Naive thymus-derived CD4-positive, alpha-beta T cell (primary cell): ENCODE measurements at regions of chr16 and their contacts with region 1.

Region 1: GRCh38 chr16:3282730-3283524 is at the start of gene ZNF263:
- DNase-seq: peak; percentile 91 to 97 (median 95)
- ATAC-seq: peak; percentile 94
- H3K4me3 ChIP-seq: peak within 1 kb of the TSS; percentile 83
- H3K4me3 Mint-ChIP-seq: peak within 1 kb of the TSS; percentile 93 to 98 (median 96)
- H3K27ac ChIP-seq: peak within 1 kb of the TSS; percentile 92
- H3K27ac Mint-ChIP-seq: peak within 1 kb of the TSS; percentile 96 to 99 (median 98)
- H3K4me1 ChIP-seq: peaks cover 18 to 26% of the 10 kb centered on the region in 2 donors
- H3K4me1 Mint-ChIP-seq: peaks cover 21 to 48% (median 40%) of the 10 kb centered on the region in 7 donors
- H3K27me3 ChIP-seq: no peaks in the 10 kb centered on the region
- H3K27me3 Mint-ChIP-seq: peaks cover 0 to 3% (median 0%) of the 10 kb centered on the region in 5 donors
- total RNA-seq, gene ZNF263: 26.1 to 51.6 (median 36.9) TPM

Region 2: DNA sequence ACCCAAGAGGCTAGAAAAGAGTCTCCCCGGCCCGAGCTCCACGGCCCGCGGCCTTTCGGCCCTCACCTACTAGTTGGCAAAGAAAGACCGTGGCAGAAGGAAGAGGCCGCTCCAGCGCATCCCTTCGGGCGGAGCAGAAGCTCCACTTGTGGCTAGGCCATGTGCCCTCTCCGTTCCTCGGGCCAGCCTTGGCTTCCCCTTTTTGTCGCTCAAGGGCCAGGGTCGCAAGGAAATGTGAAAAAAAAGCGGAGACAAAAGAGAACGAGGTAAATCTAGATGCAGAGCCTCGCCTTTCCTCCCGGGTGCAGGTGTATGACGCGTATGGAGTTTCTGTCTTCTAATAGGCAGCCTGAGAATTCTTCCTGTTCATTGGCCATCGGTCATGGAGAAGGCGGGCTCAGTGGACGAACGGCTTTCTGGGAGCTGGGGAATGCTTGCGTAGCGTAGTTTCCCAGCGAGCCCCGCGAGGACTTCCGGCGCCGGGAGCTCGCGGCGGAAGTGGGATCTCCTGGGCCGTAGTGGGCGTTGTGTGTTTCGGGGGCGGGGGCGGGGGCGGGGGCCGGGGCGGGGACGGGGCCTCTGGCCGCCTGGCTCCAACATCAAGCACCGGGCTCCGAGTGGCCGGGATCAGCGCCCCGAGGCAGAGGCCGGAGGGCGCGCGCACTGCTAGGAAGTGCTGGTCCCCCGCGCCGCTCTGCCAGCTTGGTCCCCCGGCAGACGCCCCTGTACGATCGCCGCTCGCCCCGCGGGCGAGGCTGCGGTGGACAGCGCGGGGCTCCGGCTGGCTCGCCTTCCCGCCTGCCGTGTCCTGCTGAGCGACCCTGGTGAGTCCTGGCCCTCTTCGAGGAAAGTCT is 148.1 kb before region 1 on chr16 and contains the start of gene ZNF213:
- CTCF ChIA-PET with region 1: no interaction called
- POLR2A ChIA-PET with region 1: interaction called, 6 read pairs
- intact Hi-C with region 1: loop called in 1 of 2 experiments (anchors 1 kb)
- DNase-seq: peak; percentile 70 to 97 (median 95)
- ATAC-seq: peak; percentile 98
- H3K4me3 ChIP-seq: peak within 1 kb of the TSS; percentile 94
- H3K4me3 Mint-ChIP-seq: peak within 1 kb of the TSS; percentile 93 to 99 (median 96)
- H3K27ac ChIP-seq: peak within 1 kb of the TSS; percentile 93
- H3K27ac Mint-ChIP-seq: peak within 1 kb of the TSS; percentile 94 to 98 (median 97)
- H3K4me1 ChIP-seq: peaks cover 10 to 11% of the 10 kb centered on the region in 2 donors
- H3K4me1 Mint-ChIP-seq: peaks cover 12 to 45% (median 34%) of the 10 kb centered on the region in 7 donors
- H3K27me3 ChIP-seq: no peaks in the 10 kb centered on the region
- H3K27me3 Mint-ChIP-seq: no peaks in the 10 kb centered on the region
- total RNA-seq, gene ZNF213: 3.8 to 14.0 (median 11.8) TPM

Region 3: DNA sequence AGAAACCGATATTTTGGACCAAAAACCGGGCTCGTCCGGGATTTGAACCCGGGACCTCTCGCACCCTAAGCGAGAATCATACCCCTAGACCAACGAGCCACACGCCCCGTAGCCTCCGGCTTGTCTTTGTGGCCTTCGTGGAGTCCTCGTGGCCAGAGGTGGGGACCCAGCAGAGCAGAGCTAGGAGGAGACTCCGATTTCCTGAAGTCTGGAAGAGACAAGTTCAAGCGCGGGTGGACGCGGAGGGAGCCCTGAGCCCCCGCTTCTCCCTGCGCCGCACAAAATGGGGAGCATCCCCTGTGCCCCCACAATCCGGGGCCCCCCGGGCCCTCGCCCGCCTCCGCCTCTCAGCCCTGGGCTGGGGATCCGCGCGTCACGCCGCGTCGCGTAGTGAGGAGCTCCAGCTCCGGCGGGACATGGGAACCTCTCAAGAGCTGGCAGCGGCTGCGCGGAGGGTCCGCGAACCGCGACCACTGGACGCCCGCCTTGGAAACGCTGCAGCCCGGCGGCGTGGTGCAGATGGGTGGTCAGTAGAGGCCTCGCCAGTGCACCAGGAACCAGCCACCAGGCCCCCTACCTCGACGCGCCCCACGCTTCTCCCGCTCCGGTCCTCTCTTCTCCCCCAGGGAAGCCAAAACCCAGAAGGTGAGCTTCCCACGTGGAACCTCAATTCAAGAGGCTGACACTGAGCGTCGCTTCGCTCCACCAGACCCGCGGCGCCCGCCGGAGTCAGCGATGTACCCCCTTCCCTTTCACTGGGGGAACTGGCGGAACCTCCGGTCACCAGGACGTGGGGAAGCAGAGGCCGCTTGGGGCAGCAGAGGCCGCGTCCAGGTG is 100.1 kb before region 1 on chr16:
- CTCF ChIA-PET with region 1: interaction called, 3 read pairs
- POLR2A ChIA-PET with region 1: interaction called, 10 read pairs
- intact Hi-C with region 1: loop called in 1 of 2 experiments (anchors 1 kb)
- DNase-seq: peak in 5 of 9 donors; percentile 32 to 71 (median 43)
- ATAC-seq: peak; percentile 41
- H3K4me3 ChIP-seq: peak overlapping the region; percentile 58
- H3K4me3 Mint-ChIP-seq: peak overlapping the region; percentile 72 to 86 (median 79)
- H3K27ac ChIP-seq: no peak overlapping the region
- H3K27ac Mint-ChIP-seq: peak overlapping the region in 7 of 9 donors; percentile 22 to 86 (median 49)
- H3K4me1 ChIP-seq: peaks cover 8 to 16% of the 10 kb centered on the region in 2 donors
- H3K4me1 Mint-ChIP-seq: peaks cover 24 to 38% (median 27%) of the 10 kb centered on the region in 7 donors
- H3K27me3 ChIP-seq: peaks cover 4 to 26% of the 10 kb centered on the region in 2 donors
- H3K27me3 Mint-ChIP-seq: peaks cover 77 to 88% (median 81%) of the 10 kb centered on the region in 5 donors

Region 4: DNA sequence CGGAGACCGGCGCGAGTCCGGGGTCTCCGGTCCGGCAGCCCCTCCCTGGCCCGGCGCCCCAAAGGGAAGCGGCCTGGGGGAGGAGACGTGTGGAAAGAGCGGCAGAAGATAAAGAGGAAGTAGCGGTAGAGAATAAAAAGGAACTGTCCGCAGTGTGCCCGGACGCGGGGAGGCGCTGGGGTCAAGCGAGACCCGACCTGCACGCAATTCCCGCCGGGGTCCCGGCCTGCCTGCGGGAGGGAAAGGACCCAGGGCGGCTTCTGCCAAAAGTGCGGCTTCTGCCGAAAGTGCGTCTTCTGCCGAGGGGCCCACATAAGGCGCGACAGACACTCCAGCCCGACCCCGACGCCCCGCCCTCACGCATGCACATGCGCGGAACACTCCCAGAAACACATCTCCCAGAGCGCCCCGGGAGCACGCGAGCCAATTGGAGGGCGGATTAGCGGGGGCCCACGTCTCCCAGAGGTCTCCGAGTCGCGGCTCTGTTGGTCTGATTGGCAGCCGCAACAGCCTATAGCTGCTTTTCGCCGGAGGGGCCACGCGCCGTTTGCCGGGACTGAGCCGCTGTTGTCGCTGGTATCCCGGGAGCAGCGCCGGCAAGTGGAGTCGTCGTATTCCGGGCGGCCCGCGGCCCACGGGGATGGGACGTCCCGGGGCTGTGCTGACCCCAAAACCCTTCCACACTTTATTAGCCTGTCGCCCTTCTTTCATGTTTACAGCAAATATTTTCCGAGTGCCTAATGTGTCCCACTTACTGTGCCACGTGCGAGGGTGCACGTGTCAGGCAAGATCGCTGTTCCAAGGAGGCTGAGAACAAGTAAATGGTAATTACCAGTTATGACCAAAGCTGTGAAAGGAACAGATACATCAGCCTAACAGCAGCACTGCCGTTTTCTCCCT is 18.5 kb before region 1 on chr16:
- CTCF ChIA-PET with region 1: interaction called, 3 read pairs
- POLR2A ChIA-PET with region 1: interaction called, 86 read pairs
- intact Hi-C with region 1: loop called (anchors 1 kb)
- DNase-seq: peak; percentile 88 to 97 (median 96)
- ATAC-seq: peak; percentile 88
- H3K4me3 ChIP-seq: peak overlapping the region; percentile 81
- H3K4me3 Mint-ChIP-seq: peak overlapping the region; percentile 84 to 97 (median 93)
- H3K27ac ChIP-seq: peak overlapping the region; percentile 92
- H3K27ac Mint-ChIP-seq: peak overlapping the region; percentile 93 to 98 (median 97)
- H3K4me1 ChIP-seq: peaks cover 18 to 20% of the 10 kb centered on the region in 2 donors
- H3K4me1 Mint-ChIP-seq: peaks cover 6 to 42% (median 29%) of the 10 kb centered on the region in 7 donors
- H3K27me3 ChIP-seq: no peaks in the 10 kb centered on the region
- H3K27me3 Mint-ChIP-seq: no peaks in the 10 kb centered on the region

Region 5: DNA sequence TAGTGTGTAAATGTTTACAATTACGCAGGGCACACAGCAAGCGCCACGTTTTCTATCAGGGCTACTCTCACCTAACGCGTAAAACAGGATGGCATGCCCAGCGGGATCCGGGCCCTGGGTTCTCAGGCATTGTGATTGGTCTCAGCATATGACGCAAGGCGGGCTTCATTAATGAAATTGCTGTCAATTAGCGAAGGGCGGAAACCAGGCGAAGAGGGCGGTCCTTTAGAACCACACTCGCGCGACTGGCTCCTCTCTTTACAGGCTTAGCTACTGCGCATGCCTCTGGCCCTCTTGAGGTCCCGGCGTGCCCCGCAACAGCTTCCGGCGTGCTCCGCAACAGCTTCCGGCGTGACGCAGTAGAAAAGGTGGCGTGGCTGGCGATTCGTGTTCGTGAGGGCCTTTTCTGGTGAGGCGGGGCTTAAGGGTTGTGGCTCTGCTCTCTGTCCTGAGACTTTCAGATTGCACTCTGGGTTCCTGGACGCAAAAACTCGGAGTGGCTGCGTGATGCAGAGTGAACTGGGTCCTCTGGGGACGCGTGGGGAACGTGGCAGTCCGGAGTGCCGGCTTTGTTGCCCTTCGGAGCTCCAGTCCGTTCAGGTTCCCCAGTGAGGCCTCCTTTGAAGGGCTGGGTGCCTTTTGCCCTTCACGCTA is 82.0 kb after region 1 on chr16:
- CTCF ChIA-PET with region 1: no interaction called
- POLR2A ChIA-PET with region 1: interaction called, 9 read pairs
- intact Hi-C with region 1: loop called in 1 of 2 experiments (anchors 2 kb)
- DNase-seq: peak; percentile 50 to 92 (median 87)
- ATAC-seq: peak; percentile 93
- H3K4me3 ChIP-seq: peak overlapping the region; percentile 70
- H3K4me3 Mint-ChIP-seq: peak overlapping the region; percentile 37 to 92 (median 84)
- H3K27ac ChIP-seq: peak overlapping the region; percentile 79
- H3K27ac Mint-ChIP-seq: peak overlapping the region; percentile 73 to 96 (median 91)
- H3K4me1 ChIP-seq: peaks cover 0 to 6% of the 10 kb centered on the region in 2 donors
- H3K4me1 Mint-ChIP-seq: peaks cover 0 to 19% (median 12%) of the 10 kb centered on the region in 7 donors
- H3K27me3 ChIP-seq: no peaks in the 10 kb centered on the region
- H3K27me3 Mint-ChIP-seq: peaks cover 0 to 30% (median 21%) of the 10 kb centered on the region in 5 donors

Region 6: DNA sequence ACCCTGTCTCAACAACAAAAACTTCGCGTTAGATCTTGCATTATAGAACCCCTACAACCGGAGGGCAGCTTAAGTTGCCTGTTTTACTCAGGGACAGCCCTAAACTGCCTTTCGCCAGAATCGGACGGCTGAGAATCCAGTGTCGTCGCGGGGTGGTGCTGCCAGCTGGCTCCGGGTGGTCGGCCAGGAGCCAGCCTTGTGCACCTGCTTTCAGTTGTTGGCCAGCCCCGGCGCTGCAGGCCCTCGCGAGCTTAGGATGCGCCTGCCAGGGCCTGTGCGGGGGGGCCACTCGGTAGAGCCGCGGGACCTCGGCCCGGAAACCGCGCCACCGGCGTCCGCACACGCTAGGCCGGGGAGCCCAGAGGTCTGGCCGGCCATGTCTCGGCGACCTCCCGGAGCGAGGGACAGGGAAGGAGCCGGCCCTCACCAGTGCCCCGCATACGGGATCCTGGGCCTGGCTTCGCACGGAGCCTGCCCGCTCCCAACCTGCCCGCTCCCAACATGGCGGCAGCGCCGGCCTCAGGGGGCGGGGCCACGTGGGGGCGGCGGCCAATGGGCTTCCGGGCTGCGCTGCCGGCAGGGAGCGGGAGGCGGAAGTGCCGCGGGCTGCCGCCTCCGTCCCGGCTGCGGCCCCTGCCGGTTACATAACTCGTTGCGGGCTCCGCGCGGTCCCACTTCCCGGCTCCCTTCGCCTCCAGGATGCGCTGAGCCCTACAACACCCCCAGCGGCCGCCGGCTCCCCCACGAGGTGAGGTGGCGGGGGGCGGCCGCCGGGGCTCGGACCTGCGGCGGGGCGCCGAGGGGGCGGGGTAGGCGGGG is 174.7 kb after region 1 on chr16:
- CTCF ChIA-PET with region 1: interaction called, 4 read pairs
- POLR2A ChIA-PET with region 1: interaction called, 9 read pairs
- intact Hi-C with region 1: loop called (anchors 1 kb)
- DNase-seq: peak; percentile 87 to 95 (median 93)
- ATAC-seq: peak; percentile 96
- H3K4me3 ChIP-seq: peak overlapping the region; percentile 84
- H3K4me3 Mint-ChIP-seq: peak overlapping the region; percentile 78 to 88 (median 86)
- H3K27ac ChIP-seq: peak overlapping the region; percentile 96
- H3K27ac Mint-ChIP-seq: peak overlapping the region; percentile 74 to 94 (median 88)
- H3K4me1 ChIP-seq: peaks cover 37 to 45% of the 10 kb centered on the region in 2 donors
- H3K4me1 Mint-ChIP-seq: peaks cover 33 to 57% (median 48%) of the 10 kb centered on the region in 7 donors
- H3K27me3 ChIP-seq: no peaks in the 10 kb centered on the region
- H3K27me3 Mint-ChIP-seq: no peaks in the 10 kb centered on the region

Region 7: GRCh38 chr16:3530371-3530914 is 247.5 kb after region 1 on chr16:
- CTCF ChIA-PET with region 1: no interaction called
- POLR2A ChIA-PET with region 1: no interaction called
- intact Hi-C with region 1: no loop called
- DNase-seq: no peak
- ATAC-seq: no peak
- H3K4me3 ChIP-seq: no peak overlapping the region
- H3K4me3 Mint-ChIP-seq: no peak overlapping the region
- H3K27ac ChIP-seq: no peak overlapping the region
- H3K27ac Mint-ChIP-seq: peak overlapping the region in 2 of 9 donors; percentile 17 to 56
- H3K4me1 ChIP-seq: no peaks in the 10 kb centered on the region
- H3K4me1 Mint-ChIP-seq: peaks cover 12 to 40% (median 32%) of the 10 kb centered on the region in 7 donors
- H3K27me3 ChIP-seq: no peaks in the 10 kb centered on the region
- H3K27me3 Mint-ChIP-seq: no peaks in the 10 kb centered on the region